ENCODE measurements at regions of chr20 and their contacts with region 1.

Region 1: DNA sequence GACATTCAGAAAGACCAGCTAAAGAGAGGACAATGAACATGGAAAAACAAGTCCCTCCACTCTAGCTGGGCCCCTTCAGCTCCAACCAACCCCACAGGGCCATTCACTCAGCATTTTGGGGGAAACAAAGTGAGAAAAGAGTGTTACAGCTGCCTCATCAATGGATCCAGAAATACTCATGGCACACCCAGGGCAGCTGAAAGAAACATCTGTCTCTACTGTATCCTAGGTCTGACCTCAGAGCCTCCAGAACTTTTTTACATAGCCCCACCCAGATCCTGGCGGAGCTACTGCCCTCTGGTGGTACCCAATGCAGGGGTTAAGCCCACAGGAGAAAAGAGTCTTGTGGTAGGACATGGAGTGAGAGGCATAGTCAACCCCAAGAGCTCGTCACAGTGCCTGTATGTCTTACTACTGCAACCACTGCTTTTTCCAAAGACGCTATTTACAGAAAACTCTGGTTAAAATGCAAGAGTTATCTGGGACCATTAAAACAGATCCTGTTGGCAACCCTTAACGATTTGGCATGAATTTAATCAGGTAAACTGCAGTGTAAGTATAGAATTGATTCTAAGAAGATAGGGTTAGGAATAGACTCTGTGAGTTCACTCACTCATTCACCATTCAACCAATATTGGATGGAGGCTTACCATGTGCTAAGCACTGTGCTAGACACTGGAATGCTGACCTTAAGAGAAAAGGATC is 37.4 kb upstream of the FAM83C start:
- DNase-seq: peak; percentile 80
- ATAC-seq: peak; percentile 87
- H3K4me3 Mint-ChIP-seq: no peak overlapping the region
- H3K27ac Mint-ChIP-seq: no peak overlapping the region
- H3K4me1 Mint-ChIP-seq: peaks cover 45% of the 10 kb centered on the region
- H3K27me3 Mint-ChIP-seq: no peaks in the 10 kb centered on the region
- CTCF ChIP-seq: peak; percentile 70

Region 2: GRCh38 chr20:35104685-35105295 is 224.8 kb before region 1 on chr20:
- CTCF ChIA-PET with region 1: no interaction called
- POLR2A ChIA-PET with region 1: no interaction called
- intact Hi-C with region 1: no loop called
- DNase-seq: no peak
- ATAC-seq: no peak
- H3K4me3 Mint-ChIP-seq: no peak overlapping the region
- H3K27ac Mint-ChIP-seq: no peak overlapping the region
- H3K4me1 Mint-ChIP-seq: no peaks in the 10 kb centered on the region
- H3K27me3 Mint-ChIP-seq: no peaks in the 10 kb centered on the region
- CTCF ChIP-seq: no peak

Region 3: DNA sequence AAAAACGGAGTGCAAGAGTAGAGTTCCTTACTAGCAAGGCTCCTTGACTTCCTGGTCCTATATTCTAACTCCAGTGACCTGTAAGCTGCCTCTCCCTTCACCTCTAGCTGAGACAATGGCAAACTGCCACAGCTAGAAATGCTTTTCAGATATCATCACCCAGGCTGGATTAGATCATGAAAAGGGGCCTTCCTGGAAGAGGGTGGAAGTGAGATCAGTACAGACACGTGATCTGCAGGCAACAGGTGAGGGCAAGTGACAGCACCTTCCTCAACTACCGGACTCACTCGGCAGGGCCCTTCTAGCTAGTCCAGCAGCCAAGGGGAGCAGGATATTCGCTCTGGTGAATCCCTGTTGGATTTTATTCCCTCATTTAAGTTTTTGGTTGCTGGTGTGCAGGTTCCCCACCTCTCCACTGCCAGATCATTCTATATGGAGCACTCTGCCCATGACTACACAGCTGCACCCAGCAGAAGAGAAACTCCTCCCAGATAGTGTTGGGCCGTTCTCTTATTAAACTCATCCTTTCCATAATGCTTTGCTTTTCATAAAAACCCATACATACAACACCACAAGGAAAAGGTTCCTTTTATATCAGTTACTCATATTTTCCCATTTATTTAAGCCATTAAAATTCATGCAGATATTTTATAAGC is 11.0 kb before region 1 on chr20:
- CTCF ChIA-PET with region 1: interaction called, 37 read pairs
- POLR2A ChIA-PET with region 1: interaction called, 4 read pairs
- intact Hi-C with region 1: no loop called
- DNase-seq: no peak
- ATAC-seq: peak; percentile 50
- H3K4me3 Mint-ChIP-seq: no peak overlapping the region
- H3K27ac Mint-ChIP-seq: no peak overlapping the region
- H3K4me1 Mint-ChIP-seq: peaks cover 39% of the 10 kb centered on the region
- H3K27me3 Mint-ChIP-seq: no peaks in the 10 kb centered on the region
- CTCF ChIP-seq: no peak

Region 4: GRCh38 chr20:35344354-35344837 is 14.8 kb after region 1 on chr20:
- CTCF ChIA-PET with region 1: interaction called, 10 read pairs
- POLR2A ChIA-PET with region 1: no interaction called
- intact Hi-C with region 1: no loop called
- DNase-seq: no peak
- ATAC-seq: no peak
- H3K4me3 Mint-ChIP-seq: no peak overlapping the region
- H3K27ac Mint-ChIP-seq: no peak overlapping the region
- H3K4me1 Mint-ChIP-seq: no peaks in the 10 kb centered on the region
- H3K27me3 Mint-ChIP-seq: no peaks in the 10 kb centered on the region
- CTCF ChIP-seq: no peak

Measured in activated CD8-positive, alpha-beta T cell treated with anti-CD3 and anti-CD28 coated beads for 36 hours (primary cell).